Body of pancreas (tissue), 4 donors: ENCODE measurements at regions of chr17 and their contacts with region 1.

Region 1: GRCh38 chr17:47239619-47240374 is 13.8 kb upstream of the ITGB3 start:
- DNase-seq: peak; percentile 45 to 76 (median 53)
- ATAC-seq: peak; percentile 67
- H3K4me3 ChIP-seq: no peak overlapping the region
- H3K27ac ChIP-seq: peak overlapping the region in 2 of 4 donors; percentile 39 to 42
- H3K4me1 ChIP-seq: no peaks in the 10 kb centered on the region
- H3K27me3 ChIP-seq: no peaks in the 10 kb centered on the region
- CTCF ChIP-seq: no peak
- POLR2A ChIP-seq: no peak

Region 2: GRCh38 chr17:47057830-47058229 is 182.0 kb before region 1 on chr17:
- intact Hi-C with region 1: no loop called
- DNase-seq: no peak
- ATAC-seq: no peak
- H3K4me3 ChIP-seq: no peak overlapping the region
- H3K27ac ChIP-seq: no peak overlapping the region
- H3K4me1 ChIP-seq: no peaks in the 10 kb centered on the region
- H3K27me3 ChIP-seq: no peaks in the 10 kb centered on the region
- CTCF ChIP-seq: no peak
- POLR2A ChIP-seq: no peak

Region 3: GRCh38 chr17:47315451-47316266 is 75.9 kb after region 1 on chr17:
- intact Hi-C with region 1: loop called (anchors 5 kb)
- DNase-seq: peak in 3 of 4 donors; percentile 35 to 60 (median 47)
- ATAC-seq: peak; percentile 83
- H3K4me3 ChIP-seq: no peak overlapping the region
- H3K27ac ChIP-seq: no peak overlapping the region
- H3K4me1 ChIP-seq: no peaks in the 10 kb centered on the region
- H3K27me3 ChIP-seq: no peaks in the 10 kb centered on the region
- CTCF ChIP-seq: peak; percentile 34 to 88 (median 77)
- POLR2A ChIP-seq: no peak